ENCODE measurements at regions of chr9 and their contacts with region 1.

Region 1: GRCh38 chr9:105244003-105244733 is at the start of gene SLC44A1:
- DNase-seq: peak; percentile 99
- total RNA-seq, gene SLC44A1: 22.6 TPM

Region 2: GRCh38 chr9:104927912-104928740 is 316.0 kb before region 1 on chr9 and contains the start of gene ABCA1:
- intact Hi-C with region 1: loop called (anchors 10 kb)
- DNase-seq: peak; percentile 94
- total RNA-seq, gene ABCA1: 5.4 TPM

Region 3: GRCh38 chr9:105205787-105206495 is 38.2 kb before region 1 on chr9:
- intact Hi-C with region 1: loop called (anchors 5 kb)
- DNase-seq: no peak

Region 4: DNA sequence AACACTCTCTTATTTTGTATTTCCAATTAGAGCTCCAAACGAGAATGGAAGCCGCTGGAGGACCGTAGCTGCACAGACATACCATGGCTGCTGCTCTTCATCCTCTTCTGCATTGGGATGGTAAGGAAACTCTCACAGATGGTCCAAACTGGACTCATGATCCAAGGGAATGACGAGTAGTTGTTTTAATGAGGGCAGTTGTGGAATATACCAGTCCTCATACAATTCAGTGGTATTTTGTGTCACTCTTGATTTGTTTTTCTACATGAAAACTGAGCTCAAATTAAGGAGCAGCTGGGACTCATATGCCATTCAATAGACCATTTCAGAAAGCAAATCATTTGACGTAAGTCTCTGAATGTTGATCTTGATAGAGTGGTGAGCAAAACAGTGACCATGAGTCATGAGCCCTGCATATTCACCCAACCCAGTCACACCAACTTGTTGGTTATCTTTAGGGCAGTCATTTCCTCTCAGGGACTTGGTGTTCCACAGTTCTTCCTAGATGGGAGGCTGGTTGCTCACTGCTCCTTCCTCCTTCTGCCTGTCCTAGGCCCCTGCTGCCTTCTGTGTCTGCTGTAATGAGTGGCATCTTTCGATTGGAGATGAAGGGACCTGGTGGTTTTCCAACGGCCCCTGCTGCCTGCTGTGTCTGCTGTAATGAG is 55.2 kb after region 1 on chr9:
- intact Hi-C with region 1: loop called (anchors 5 kb)
- DNase-seq: no peak

Region 5: DNA sequence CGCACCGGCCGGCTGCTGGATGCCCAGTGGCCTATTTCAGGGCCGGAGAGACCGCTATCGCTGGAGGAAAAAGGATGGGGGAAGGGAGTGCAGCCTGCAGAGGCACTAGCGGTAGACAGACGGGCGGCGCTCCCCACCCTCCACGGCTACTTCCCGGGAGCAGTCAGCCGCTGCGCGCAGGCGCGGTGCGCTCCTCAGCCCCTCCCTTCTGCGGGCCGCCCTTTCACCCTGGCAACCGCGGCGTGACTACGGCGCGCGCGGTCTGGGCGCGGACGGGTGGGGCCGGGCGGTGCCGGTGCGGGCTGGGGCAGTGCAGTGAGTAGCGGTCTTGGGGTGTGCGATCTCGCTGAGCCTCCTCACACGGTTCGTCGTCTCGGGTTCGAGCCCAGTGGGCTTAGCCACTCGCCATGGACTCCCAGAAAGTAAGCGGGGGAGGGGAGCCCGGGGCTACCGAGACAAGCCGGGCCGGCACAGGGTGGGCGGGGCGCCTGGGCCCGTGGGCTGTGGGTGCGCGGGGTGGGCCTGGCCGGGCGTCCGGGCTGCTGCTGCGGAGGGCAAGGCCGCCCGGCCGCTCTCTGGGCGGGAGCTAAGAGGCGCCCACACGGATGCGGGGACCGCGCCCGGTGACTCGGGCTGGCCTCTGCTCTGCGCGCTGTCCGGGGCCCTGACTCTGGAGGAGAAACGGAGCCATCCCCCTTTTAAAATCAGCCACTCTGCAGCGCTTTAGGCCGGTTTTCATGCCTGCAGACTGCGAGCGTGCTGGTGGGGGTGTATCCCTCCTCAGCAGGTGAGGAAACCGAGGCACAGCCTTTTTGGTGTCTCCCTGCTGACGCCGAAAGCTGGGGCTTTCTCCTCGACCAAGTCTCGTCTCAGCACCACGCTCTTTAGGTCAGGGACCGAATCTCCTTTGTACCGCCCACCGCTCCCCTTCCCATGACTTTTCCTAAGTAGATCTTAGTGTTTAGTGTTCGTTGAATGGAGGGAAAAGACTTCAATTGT is 203.9 kb after region 1 on chr9 and contains the start of gene FSD1L:
- intact Hi-C with region 1: loop called (anchors 10 kb)
- DNase-seq: peak; percentile 97
- total RNA-seq, gene FSD1L: 10.8 TPM

Region 6: DNA sequence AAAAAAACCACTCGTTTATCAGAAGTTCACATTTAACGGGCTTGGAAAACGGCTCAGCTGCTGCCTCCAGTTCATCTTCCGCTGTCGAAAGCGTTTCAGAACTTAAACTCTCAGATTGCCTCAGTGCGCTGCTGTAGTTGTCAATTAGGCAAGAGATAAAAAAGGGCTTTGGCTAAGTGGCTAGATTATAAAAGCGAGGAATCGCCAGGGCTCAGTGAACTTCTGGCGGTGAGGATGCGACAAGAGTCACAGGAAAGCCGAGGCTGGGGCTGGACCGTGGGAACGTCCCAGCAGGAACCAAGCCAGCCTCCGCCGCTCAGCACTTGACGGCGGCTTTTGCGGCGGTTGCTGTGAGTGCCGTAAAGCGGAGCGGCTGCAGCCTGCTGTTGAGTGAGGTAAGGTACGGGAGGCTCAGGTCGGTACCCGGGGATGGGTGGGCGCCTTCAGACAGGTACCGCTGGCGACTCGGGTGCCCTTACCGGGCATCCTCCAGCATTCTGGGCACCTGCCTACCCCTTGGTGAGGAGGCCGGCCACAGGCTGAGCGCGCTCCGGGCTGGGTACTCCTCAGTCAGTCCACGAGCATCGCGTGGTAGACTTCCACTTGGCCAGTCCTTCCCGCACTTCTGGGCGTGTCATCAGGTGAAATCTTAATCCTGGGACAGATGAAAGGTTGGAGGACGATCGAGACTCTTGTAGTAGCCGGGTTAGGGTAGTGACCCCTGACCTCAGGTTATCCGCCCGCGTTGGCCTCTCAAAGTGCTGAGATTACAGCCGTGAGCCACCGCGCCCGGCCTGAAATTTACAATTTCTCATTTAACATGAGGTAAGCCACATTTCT is 313.8 kb after region 1 on chr9 and contains the start of gene FKTN:
- intact Hi-C with region 1: loop called (anchors 5 kb)
- DNase-seq: peak; percentile 95
- total RNA-seq, gene FKTN: 8.8 TPM